Psoas muscle (tissue), 8 donors: ENCODE measurements at regions of chr6 and their contacts with region 1.

Region 1: DNA sequence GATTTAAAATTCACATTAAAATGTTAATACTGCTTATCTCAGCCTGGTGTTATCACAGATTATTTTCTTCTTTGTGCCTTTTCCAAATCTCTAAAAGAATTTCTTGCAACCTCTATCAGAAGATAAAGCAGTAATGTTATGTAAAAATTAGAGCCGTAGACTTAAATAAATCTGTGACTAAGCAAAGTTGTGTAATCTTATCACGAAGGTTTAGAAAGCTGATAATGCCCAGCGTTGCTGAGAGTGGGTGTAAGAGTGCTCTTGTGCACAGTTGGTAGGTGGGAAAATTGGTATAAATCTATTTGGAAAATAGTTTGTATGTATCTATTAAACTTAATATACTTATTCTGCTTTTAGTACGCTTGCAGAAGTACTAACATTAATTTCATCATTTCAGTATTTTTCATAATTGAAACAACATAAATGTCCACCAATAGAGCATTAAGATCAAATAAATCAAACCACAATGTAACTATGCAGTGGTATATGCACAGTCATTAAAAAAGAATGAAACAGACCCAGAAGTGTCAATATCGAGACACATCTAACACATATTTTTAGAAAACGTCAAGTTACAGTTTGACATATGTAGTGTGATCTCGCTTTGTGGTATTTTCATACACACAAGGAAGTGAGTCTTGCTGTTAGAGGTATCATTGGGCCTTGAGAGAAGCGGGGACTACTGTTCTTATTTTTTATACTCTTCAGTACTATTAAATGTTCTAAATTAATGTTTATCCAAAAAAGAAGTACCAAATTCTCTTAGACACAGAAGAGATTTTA is 54.4 kb upstream of the PBOV1 start:
- DNase-seq: no peak
- ATAC-seq: no peak
- H3K4me3 ChIP-seq: no peak overlapping the region
- H3K27ac ChIP-seq: no peak overlapping the region
- H3K4me1 ChIP-seq: no peaks in the 10 kb centered on the region
- H3K27me3 ChIP-seq: peaks cover 0 to 4% (median 0%) of the 10 kb centered on the region in 3 donors
- CTCF ChIP-seq: no peak

Region 2: GRCh38 chr6:137728385-137729349 is 544.1 kb before region 1 on chr6:
- intact Hi-C with region 1: no loop called
- DNase-seq: peak; percentile 46 to 57
- ATAC-seq: peak; percentile 89 to 96 (median 92)
- H3K4me3 ChIP-seq: no peak overlapping the region
- H3K27ac ChIP-seq: peak overlapping the region; percentile 62
- H3K4me1 ChIP-seq: no peaks in the 10 kb centered on the region
- H3K27me3 ChIP-seq: no peaks in the 10 kb centered on the region
- CTCF ChIP-seq: no peak

Region 3: GRCh38 chr6:140153703-140154102 is 1881.0 kb after region 1 on chr6:
- intact Hi-C with region 1: loop called in 1 of 2 experiments (anchors 5 kb)
- DNase-seq: no peak
- ATAC-seq: no peak
- H3K4me3 ChIP-seq: no peak overlapping the region
- H3K27ac ChIP-seq: no peak overlapping the region
- H3K4me1 ChIP-seq: no peaks in the 10 kb centered on the region
- H3K27me3 ChIP-seq: no peaks in the 10 kb centered on the region
- CTCF ChIP-seq: no peak